Motor neuron (in vitro differentiated cells): ENCODE measurements at regions of chr3 and their contacts with region 1.

Region 1: GRCh38 chr3:124492811-124493210 is 237.4 kb upstream of the UMPS start:
- ATAC-seq: peak in 5 of 8 experiments; percentile 29 to 84 (median 55)
- H3K4me3 ChIP-seq: no peak overlapping the region
- H3K27ac ChIP-seq: no peak overlapping the region
- H3K4me1 ChIP-seq: no peaks in the 10 kb centered on the region

Region 2: GRCh38 chr3:123859177-123859576 is 633.6 kb before region 1 on chr3:
- in situ Hi-C with region 1: no loop called
- ATAC-seq: no peak
- H3K4me3 ChIP-seq: no peak overlapping the region
- H3K27ac ChIP-seq: no peak overlapping the region
- H3K4me1 ChIP-seq: no peaks in the 10 kb centered on the region

Region 3: DNA sequence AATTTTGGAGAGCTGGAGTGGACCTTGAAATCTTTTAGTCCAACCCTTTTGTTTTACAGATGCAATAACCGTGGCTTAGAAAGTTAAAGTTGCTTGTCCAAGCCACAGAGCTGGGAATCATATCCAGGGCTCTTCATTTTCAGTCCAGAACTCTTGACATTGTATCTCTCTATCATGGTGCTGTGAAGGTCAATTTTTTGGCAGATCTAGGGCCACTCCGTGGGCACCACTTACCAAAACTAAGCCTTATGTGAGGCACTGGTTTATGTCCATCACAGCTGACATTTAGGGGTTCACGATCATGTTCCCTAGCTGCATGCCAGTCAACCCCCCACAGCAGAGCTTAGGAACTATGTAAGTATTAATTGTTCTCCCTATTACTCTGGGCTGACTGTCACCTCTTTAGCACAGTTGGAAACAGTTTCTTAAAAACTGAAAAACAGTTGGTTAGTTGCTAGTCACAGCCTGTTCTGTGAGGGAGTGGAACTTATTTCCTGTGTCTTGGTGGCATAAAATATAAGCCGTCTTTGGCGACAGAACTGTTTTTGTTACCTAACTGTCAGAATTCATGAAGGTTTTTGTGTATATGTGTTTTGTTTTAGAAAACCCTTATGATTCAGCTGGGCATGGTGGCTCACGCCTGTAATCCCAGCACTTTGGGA is 47.9 kb after region 1 on chr3:
- in situ Hi-C with region 1: loop called in 1 of 9 experiments (anchors 10 kb)
- ATAC-seq: no peak
- H3K4me3 ChIP-seq: no peak overlapping the region
- H3K27ac ChIP-seq: no peak overlapping the region
- H3K4me1 ChIP-seq: no peaks in the 10 kb centered on the region